Mammary epithelial cell (primary cell): ENCODE measurements at regions of chr22 and their contacts with region 1.

Region 1: GRCh38 chr22:47370448-47371262 is 608.2 kb downstream of the TBC1D22A start:
- DNase-seq: no peak
- H3K4me3 ChIP-seq: no peak overlapping the region
- H3K27ac ChIP-seq: no peak overlapping the region
- H3K4me1 ChIP-seq: no peaks in the 10 kb centered on the region
- H3K27me3 ChIP-seq: no peaks in the 10 kb centered on the region
- CTCF ChIP-seq: no peak

Region 2: GRCh38 chr22:46867106-46867505 is 503.5 kb before region 1 on chr22:
- CTCF ChIA-PET with region 1: no interaction called
- dilution Hi-C with region 1: no loop called
- in situ Hi-C with region 1: no loop called
- intact Hi-C with region 1: no loop called
- DNase-seq: no peak
- H3K4me3 ChIP-seq: no peak overlapping the region
- H3K27ac ChIP-seq: no peak overlapping the region
- H3K4me1 ChIP-seq: peaks cover 15% of the 10 kb centered on the region
- H3K27me3 ChIP-seq: no peaks in the 10 kb centered on the region
- CTCF ChIP-seq: no peak

Region 3: GRCh38 chr22:47294222-47294532 is 76.5 kb before region 1 on chr22:
- CTCF ChIA-PET with region 1: no interaction called
- dilution Hi-C with region 1: no loop called
- in situ Hi-C with region 1: no loop called
- intact Hi-C with region 1: no loop called
- DNase-seq: no peak
- H3K4me3 ChIP-seq: no peak overlapping the region
- H3K27ac ChIP-seq: no peak overlapping the region
- H3K4me1 ChIP-seq: no peaks in the 10 kb centered on the region
- H3K27me3 ChIP-seq: no peaks in the 10 kb centered on the region
- CTCF ChIP-seq: no peak

Region 4: GRCh38 chr22:47307326-47307725 is 63.3 kb before region 1 on chr22:
- CTCF ChIA-PET with region 1: no interaction called
- dilution Hi-C with region 1: loop called (anchors 5 kb)
- in situ Hi-C with region 1: no loop called
- intact Hi-C with region 1: no loop called
- DNase-seq: no peak
- H3K4me3 ChIP-seq: no peak overlapping the region
- H3K27ac ChIP-seq: no peak overlapping the region
- H3K4me1 ChIP-seq: no peaks in the 10 kb centered on the region
- H3K27me3 ChIP-seq: no peaks in the 10 kb centered on the region
- CTCF ChIP-seq: no peak

Region 5: DNA sequence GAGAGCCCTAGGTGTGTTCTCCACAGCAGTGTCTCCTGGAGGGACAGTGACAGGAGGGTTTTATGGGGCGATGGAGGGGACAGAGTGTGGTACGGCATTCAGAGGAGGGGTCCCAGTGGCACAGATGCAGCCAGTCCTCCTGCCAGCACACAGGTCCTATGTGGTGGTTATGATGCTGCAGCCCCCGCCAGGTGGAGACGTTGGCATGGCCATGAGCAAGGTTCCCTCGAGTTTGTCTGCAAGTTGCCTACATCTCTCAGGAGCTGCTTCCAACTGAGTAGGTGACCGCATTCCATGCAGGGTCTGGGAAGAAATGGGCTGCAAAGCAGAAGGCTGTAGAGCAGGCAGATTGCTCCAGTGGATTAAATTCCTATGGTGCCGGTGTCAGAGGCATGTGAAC is 37.8 kb after region 1 on chr22:
- CTCF ChIA-PET with region 1: no interaction called
- dilution Hi-C with region 1: no loop called
- in situ Hi-C with region 1: no loop called
- intact Hi-C with region 1: no loop called
- DNase-seq: no peak
- H3K4me3 ChIP-seq: no peak overlapping the region
- H3K27ac ChIP-seq: no peak overlapping the region
- H3K4me1 ChIP-seq: no peaks in the 10 kb centered on the region
- H3K27me3 ChIP-seq: no peaks in the 10 kb centered on the region
- CTCF ChIP-seq: no peak

Region 6: DNA sequence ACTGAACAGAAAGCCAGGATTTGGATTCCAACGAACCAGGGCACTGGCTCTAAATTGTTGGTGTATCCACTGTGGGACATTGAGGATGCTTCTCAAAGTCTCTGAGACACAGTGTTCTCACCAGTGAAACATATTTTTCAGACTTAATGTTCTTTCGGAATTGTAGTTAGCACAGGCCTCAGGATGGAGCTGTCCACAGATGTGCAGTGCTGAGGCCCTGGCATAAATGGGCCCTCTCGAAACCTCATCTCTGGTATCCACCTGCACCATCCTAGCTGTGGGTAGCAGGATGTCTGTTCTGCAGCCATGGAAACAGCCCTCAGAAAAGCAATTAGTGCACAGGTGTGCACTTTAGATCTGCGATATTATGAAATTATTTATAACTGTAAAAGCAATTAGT is 48.6 kb after region 1 on chr22:
- CTCF ChIA-PET with region 1: no interaction called
- dilution Hi-C with region 1: loop called (anchors 5 kb)
- in situ Hi-C with region 1: no loop called
- intact Hi-C with region 1: no loop called
- DNase-seq: no peak
- H3K4me3 ChIP-seq: no peak overlapping the region
- H3K27ac ChIP-seq: no peak overlapping the region
- H3K4me1 ChIP-seq: no peaks in the 10 kb centered on the region
- H3K27me3 ChIP-seq: no peaks in the 10 kb centered on the region
- CTCF ChIP-seq: no peak

Region 7: GRCh38 chr22:47452184-47452583 is 81.5 kb after region 1 on chr22:
- CTCF ChIA-PET with region 1: no interaction called
- dilution Hi-C with region 1: no loop called
- in situ Hi-C with region 1: loop called in 1 of 2 experiments (anchors 25 kb)
- intact Hi-C with region 1: no loop called
- DNase-seq: no peak
- H3K4me3 ChIP-seq: no peak overlapping the region
- H3K27ac ChIP-seq: no peak overlapping the region
- H3K4me1 ChIP-seq: no peaks in the 10 kb centered on the region
- H3K27me3 ChIP-seq: no peaks in the 10 kb centered on the region
- CTCF ChIP-seq: no peak